Activated T-helper 1 cell treated with anti-CD3 and anti-CD28 coated beads, Interleukin-12 subunit alpha, Interleukin-12 subunit beta, Interleukin-2, Interleukin-4 antibody, amounts not matched to agents 30 ng/mL and 10 ng/mL and 1 ng/mL, durations not matched to agents 14 hours and 24 hours and 36 hours (primary cell): ENCODE measurements at regions of chr16 and their contacts with region 1.

Region 1: GRCh38 chr16:30657866-30658730 is at the start of gene FBRS:
- DNase-seq: peak; percentile 100
- H3K4me3 Mint-ChIP-seq: peak within 1 kb of the TSS; percentile 94
- H3K27ac Mint-ChIP-seq: peak within 1 kb of the TSS; percentile 99
- H3K4me1 Mint-ChIP-seq: peaks cover 44% of the 10 kb centered on the region
- H3K27me3 Mint-ChIP-seq: no peaks in the 10 kb centered on the region
- total RNA-seq, gene FBRS: 116 and 125 TPM in 2 replicates

Region 2: GRCh38 chr16:29973384-29974246 is 684.5 kb before region 1 on chr16 and contains the start of gene TAOK2:
- intact Hi-C with region 1: loop called (anchors 10 kb)
- DNase-seq: peak; percentile 97
- H3K4me3 Mint-ChIP-seq: peak within 1 kb of the TSS; percentile 92
- H3K27ac Mint-ChIP-seq: peak within 1 kb of the TSS; percentile 91
- H3K4me1 Mint-ChIP-seq: peaks cover 36% of the 10 kb centered on the region
- H3K27me3 Mint-ChIP-seq: no peaks in the 10 kb centered on the region
- total RNA-seq, gene TAOK2: 38.5 and 39.7 TPM in 2 replicates

Region 3: DNA sequence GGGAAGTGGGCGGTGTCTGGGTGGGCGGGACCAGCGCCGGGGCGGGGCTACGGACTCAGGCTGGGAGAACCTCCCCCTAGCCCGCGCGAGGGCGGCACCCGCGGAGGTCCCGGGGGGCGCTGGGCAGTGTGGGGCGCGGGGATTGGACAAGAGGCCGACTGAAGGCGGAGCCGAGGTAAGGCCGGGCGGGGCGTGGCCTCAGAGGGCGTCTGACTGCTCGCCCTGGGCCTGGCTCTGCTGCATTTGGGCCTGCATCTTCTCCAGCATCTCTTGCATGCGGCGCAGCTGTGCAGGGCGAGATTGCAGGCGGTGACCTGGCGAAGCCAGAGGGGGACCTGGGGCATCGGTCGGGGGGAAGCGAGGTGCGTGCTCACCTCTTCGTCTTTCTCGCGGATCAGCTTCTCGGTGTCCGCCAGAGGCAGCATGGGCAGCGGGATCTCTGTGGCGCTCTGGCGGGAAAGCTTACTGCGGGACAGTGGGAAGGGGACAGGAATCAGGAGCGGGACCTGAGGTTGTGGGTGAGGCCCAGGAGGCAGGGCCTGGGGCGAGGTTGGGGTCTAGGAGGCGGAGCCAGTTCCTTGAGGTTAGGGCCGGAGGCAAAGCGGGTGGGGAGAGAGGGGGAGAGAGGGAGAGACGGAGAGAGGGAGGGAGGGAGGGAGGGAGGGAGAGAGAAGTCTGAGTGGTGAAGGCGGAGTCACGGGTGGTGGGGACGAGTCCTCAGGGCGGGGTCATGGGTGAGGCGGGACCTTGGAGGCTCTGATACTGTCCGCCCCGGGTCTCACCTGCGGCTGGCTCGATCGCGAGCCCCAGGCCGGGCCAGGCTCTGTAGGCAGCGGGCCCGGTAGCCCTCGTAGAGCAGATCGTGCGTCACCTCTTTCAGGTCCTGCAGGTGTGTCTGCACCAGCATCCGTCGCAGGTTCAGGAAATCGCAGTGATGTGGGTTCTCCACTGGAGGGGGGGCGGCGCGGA is 279.6 kb before region 1 on chr16:
- intact Hi-C with region 1: loop called (anchors 1 kb)
- DNase-seq: peak; percentile 98
- H3K4me3 Mint-ChIP-seq: peak overlapping the region; percentile 97
- H3K27ac Mint-ChIP-seq: peak overlapping the region; percentile 100
- H3K4me1 Mint-ChIP-seq: peaks cover 55% of the 10 kb centered on the region
- H3K27me3 Mint-ChIP-seq: peaks cover 2% of the 10 kb centered on the region

Region 4: GRCh38 chr16:30526823-30527635 is 131.1 kb before region 1 on chr16:
- intact Hi-C with region 1: loop called (anchors 1 kb)
- DNase-seq: peak; percentile 93
- H3K4me3 Mint-ChIP-seq: peak overlapping the region; percentile 84
- H3K27ac Mint-ChIP-seq: peak overlapping the region; percentile 54
- H3K4me1 Mint-ChIP-seq: peaks cover 46% of the 10 kb centered on the region
- H3K27me3 Mint-ChIP-seq: no peaks in the 10 kb centered on the region

Region 5: GRCh38 chr16:30571695-30572600 is 86.2 kb before region 1 on chr16 and contains the start of gene ZNF688:
- intact Hi-C with region 1: loop called (anchors 1 kb)
- DNase-seq: peak; percentile 93
- H3K4me3 Mint-ChIP-seq: peak within 1 kb of the TSS; percentile 93
- H3K27ac Mint-ChIP-seq: peak within 1 kb of the TSS; percentile 90
- H3K4me1 Mint-ChIP-seq: peaks cover 56% of the 10 kb centered on the region
- H3K27me3 Mint-ChIP-seq: no peaks in the 10 kb centered on the region
- total RNA-seq, gene ZNF688: 7.4 and 9.4 TPM in 2 replicates

Region 6: DNA sequence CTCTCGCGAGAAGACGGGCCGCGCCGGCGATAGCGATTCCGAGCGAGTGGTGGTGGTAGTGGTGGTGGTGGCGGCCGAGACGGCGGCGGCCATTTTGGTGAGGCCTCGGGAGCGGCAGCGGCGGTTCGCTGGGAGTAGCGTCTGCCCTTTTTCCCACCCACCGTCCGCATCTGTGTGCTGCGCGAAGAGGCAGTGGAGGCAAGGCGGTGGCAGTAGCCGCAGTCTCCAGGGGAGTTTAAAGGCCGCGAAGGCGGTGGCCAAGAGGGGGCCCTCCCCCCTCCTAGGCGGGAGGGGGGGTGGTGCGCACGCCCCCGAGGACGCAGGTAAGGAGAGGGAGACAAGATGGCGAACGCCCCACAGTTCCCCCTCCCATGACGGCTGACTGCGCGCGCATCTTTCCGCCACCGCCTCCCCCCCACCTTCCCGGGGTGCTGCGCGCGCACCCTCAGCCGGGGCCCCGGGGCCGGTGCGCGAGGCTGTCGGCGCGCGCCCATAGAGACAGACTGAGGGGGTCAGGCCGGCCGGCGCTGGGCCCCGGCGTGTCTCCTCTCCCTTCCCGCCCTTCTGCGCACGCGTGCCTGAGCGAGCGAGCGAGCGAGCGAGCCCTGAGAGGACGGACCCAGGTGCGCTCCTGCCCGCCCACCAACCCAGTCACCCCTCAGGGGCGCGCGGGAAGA is 40.2 kb after region 1 on chr16:
- intact Hi-C with region 1: loop called (anchors 1 kb)
- DNase-seq: peak; percentile 99
- H3K4me3 Mint-ChIP-seq: peak overlapping the region; percentile 99
- H3K27ac Mint-ChIP-seq: peak overlapping the region; percentile 99
- H3K4me1 Mint-ChIP-seq: peaks cover 42% of the 10 kb centered on the region
- H3K27me3 Mint-ChIP-seq: peaks cover 2% of the 10 kb centered on the region

Region 7: GRCh38 chr16:31073968-31074813 is 416.1 kb after region 1 on chr16 and contains the starts of genes ZNF646 and ZNF668:
- intact Hi-C with region 1: loop called (anchors 1 kb)
- DNase-seq: peak; percentile 98
- H3K4me3 Mint-ChIP-seq: peak within 1 kb of the TSS; percentile 99
- H3K27ac Mint-ChIP-seq: peak within 1 kb of the TSS; percentile 96
- H3K4me1 Mint-ChIP-seq: peaks cover 35% of the 10 kb centered on the region
- H3K27me3 Mint-ChIP-seq: no peaks in the 10 kb centered on the region
- total RNA-seq, gene ZNF646: 25.3 and 26.1 TPM in 2 replicates
- total RNA-seq, gene ZNF668: 14.9 and 15.1 TPM in 2 replicates

Region 8: DNA sequence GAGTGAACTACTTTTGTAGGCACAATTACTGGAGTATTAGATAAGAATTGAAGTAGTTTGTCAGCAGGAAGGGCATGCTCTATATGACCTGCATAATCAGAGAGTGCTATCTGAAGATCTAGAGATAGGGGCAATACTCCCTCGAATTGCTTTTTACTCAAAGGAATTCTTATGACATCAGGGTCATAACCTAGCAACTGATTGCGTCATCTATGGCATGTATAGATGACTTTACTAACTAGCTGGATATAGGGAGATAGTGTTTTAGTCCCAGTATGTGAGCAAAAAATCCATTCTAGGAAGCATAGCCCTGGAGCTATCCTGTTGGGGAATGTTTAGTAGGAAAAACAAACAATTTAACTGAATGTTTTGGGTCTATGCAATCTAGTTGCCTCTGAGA is 1106.0 kb after region 1 on chr16:
- intact Hi-C with region 1: no loop called
- DNase-seq: no peak
- H3K4me3 Mint-ChIP-seq: no peak overlapping the region
- H3K27ac Mint-ChIP-seq: no peak overlapping the region
- H3K4me1 Mint-ChIP-seq: no peaks in the 10 kb centered on the region
- H3K27me3 Mint-ChIP-seq: no peaks in the 10 kb centered on the region